GM12878 (cell line): ENCODE measurements at regions of chr17 and their contacts with region 1.

Region 1: DNA sequence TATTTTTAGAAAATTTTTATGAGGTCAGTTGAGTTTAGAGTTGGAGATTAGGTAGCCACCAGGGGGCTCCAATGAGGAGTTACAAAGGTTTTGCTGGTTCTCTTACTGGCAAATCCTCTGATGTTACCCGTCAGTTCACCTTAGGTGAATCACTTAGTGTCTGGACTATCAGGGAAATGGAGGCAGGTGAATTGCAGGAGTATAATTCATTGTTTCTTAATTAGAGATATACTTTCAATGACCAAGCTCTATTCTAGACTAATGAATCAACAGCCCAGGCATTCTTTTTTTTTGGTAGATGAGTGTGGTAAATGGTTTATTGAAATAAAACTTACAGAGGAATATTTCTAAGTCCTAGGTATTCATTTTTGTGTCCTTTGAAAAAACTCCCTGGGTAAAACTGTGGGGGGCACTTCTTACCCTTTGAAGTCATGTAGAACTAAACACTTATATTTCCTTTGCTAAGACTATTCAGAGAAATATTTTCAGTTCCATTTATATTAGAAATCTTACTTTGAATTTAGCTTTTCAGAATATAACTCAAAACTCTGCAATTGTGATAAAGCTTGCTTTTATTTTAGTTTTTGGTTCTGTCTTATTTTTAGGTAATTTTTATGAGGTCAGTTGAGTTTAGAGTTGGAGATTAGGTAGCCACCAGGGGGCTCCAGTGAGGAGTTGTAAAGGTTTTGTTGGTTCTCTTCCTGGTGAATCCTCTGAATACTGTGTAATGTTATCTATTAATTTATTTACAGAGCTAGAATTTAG is 17.7 kb downstream of the PSMD11 start:
- DNase-seq: no peak
- ATAC-seq: peak; percentile 93
- H3K4me3 ChIP-seq: no peak overlapping the region
- H3K27ac ChIP-seq: no peak overlapping the region
- H3K4me1 ChIP-seq: no peaks in the 10 kb centered on the region
- H3K27me3 ChIP-seq: no peaks in the 10 kb centered on the region
- CTCF ChIP-seq: peak; percentile 35 to 64 (median 59); a peak in 5 of 6 replicates
- EP300 ChIP-seq: no peak
- POLR2A ChIP-seq: no peak
- RAD21 ChIP-seq: peak; percentile 42

Region 2: GRCh38 chr17:32444308-32445073 is 17.5 kb before region 1 on chr17 and contains the start of gene PSMD11:
- CTCF ChIA-PET with region 1: interaction called, 102 read pairs
- POLR2A ChIA-PET with region 1: interaction called, 3 read pairs
- RAD21 ChIA-PET with region 1: interaction called, 9 read pairs
- SMC1A ChIA-PET with region 1: interaction called, 8 read pairs
- in situ Hi-C with region 1: no loop called
- intact Hi-C with region 1: no loop called
- DNase-seq: peak; percentile 78
- ATAC-seq: peak; percentile 97
- H3K4me3 ChIP-seq: peak within 1 kb of the TSS; percentile 97
- H3K27ac ChIP-seq: peak within 1 kb of the TSS; percentile 81
- H3K4me1 ChIP-seq: peaks cover 3% of the 10 kb centered on the region
- H3K27me3 ChIP-seq: no peaks in the 10 kb centered on the region
- CTCF ChIP-seq: peak; percentile 91 to 97 (median 92)
- EP300 ChIP-seq: no peak
- POLR2A ChIP-seq: peak; percentile 87
- RAD21 ChIP-seq: peak; percentile 49
- polyA plus RNA-seq, gene PSMD11: 283 to 291 TPM

Region 3: GRCh38 chr17:32519228-32520103 is 57.4 kb after region 1 on chr17:
- CTCF ChIA-PET with region 1: interaction called, 11 read pairs
- POLR2A ChIA-PET with region 1: interaction called, 5 read pairs
- RAD21 ChIA-PET with region 1: interaction called, 8 read pairs
- SMC1A ChIA-PET with region 1: interaction called, 5 read pairs
- in situ Hi-C with region 1: no loop called
- intact Hi-C with region 1: no loop called
- DNase-seq: no peak
- ATAC-seq: peak; percentile 38
- H3K4me3 ChIP-seq: peak overlapping the region; percentile 25; the same call in 1 of the 2 replicates
- H3K27ac ChIP-seq: peak overlapping the region; percentile 84
- H3K4me1 ChIP-seq: peaks cover 88% of the 10 kb centered on the region
- H3K27me3 ChIP-seq: no peaks in the 10 kb centered on the region
- CTCF ChIP-seq: no peak
- EP300 ChIP-seq: no peak
- POLR2A ChIP-seq: peak; percentile 61; the same call in 1 of the 2 replicates
- RAD21 ChIP-seq: no peak

Region 4: GRCh38 chr17:32602396-32602795 is 140.4 kb after region 1 on chr17:
- CTCF ChIA-PET with region 1: interaction called, 17 read pairs
- POLR2A ChIA-PET with region 1: no interaction called
- RAD21 ChIA-PET with region 1: interaction called, 8 read pairs
- SMC1A ChIA-PET with region 1: interaction called, 28 read pairs
- in situ Hi-C with region 1: no loop called
- intact Hi-C with region 1: loop called (anchors 5 kb)
- DNase-seq: no peak
- ATAC-seq: no peak
- H3K4me3 ChIP-seq: no peak overlapping the region
- H3K27ac ChIP-seq: no peak overlapping the region
- H3K4me1 ChIP-seq: no peaks in the 10 kb centered on the region
- H3K27me3 ChIP-seq: no peaks in the 10 kb centered on the region
- CTCF ChIP-seq: no peak
- EP300 ChIP-seq: no peak
- POLR2A ChIP-seq: no peak
- RAD21 ChIP-seq: no peak

Region 5: DNA sequence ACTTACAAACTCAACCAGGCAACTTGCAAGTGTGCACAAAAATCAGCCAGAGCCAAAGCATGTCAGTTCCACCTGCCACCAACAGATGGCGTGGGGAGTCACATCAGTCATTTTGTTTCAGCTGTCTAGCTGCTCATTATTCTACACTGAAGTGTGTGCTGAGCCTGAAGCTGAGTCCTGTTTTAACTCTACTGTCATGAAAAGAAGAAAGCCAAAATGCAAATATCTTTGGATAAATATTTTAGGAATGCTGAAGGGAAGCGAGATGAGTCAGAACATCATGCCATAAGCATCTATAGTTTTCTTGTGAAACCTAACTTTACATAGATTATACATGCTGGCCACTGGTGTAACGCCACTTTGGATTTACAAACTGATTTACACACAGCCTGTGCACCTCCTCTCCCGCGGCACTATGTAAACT is 197.4 kb after region 1 on chr17:
- CTCF ChIA-PET with region 1: interaction called, 32 read pairs
- POLR2A ChIA-PET with region 1: no interaction called
- RAD21 ChIA-PET with region 1: no interaction called
- SMC1A ChIA-PET with region 1: interaction called, 5 read pairs
- in situ Hi-C with region 1: no loop called
- intact Hi-C with region 1: no loop called
- DNase-seq: peak; percentile 40
- ATAC-seq: peak; percentile 87
- H3K4me3 ChIP-seq: no peak overlapping the region
- H3K27ac ChIP-seq: no peak overlapping the region
- H3K4me1 ChIP-seq: no peaks in the 10 kb centered on the region
- H3K27me3 ChIP-seq: no peaks in the 10 kb centered on the region
- CTCF ChIP-seq: peak; percentile 85 to 97 (median 94)
- EP300 ChIP-seq: no peak
- POLR2A ChIP-seq: no peak
- RAD21 ChIP-seq: peak; percentile 61

Region 6: GRCh38 chr17:32769839-32770238 is 307.8 kb after region 1 on chr17:
- CTCF ChIA-PET with region 1: interaction called, 15 read pairs
- POLR2A ChIA-PET with region 1: no interaction called
- RAD21 ChIA-PET with region 1: no interaction called
- SMC1A ChIA-PET with region 1: interaction called, 6 read pairs
- in situ Hi-C with region 1: no loop called
- intact Hi-C with region 1: no loop called
- DNase-seq: no peak
- ATAC-seq: no peak
- H3K4me3 ChIP-seq: no peak overlapping the region
- H3K27ac ChIP-seq: no peak overlapping the region
- H3K4me1 ChIP-seq: no peaks in the 10 kb centered on the region
- H3K27me3 ChIP-seq: no peaks in the 10 kb centered on the region
- CTCF ChIP-seq: 0 out of 6 replicates have a peak, but pooled peaks of 1 of the 3 experiments have one; percentile 12
- EP300 ChIP-seq: no peak
- POLR2A ChIP-seq: no peak
- RAD21 ChIP-seq: 0 out of 2 replicates have a peak, but pooled peaks have one; percentile 5

Region 7: GRCh38 chr17:32909787-32910369 is 447.8 kb after region 1 on chr17:
- CTCF ChIA-PET with region 1: interaction called, 4 read pairs
- POLR2A ChIA-PET with region 1: no interaction called
- RAD21 ChIA-PET with region 1: interaction called, 3 read pairs
- SMC1A ChIA-PET with region 1: interaction called, 6 read pairs
- in situ Hi-C with region 1: loop called (anchors 25 kb)
- intact Hi-C with region 1: no loop called
- DNase-seq: peak; percentile 46
- ATAC-seq: peak; percentile 97
- H3K4me3 ChIP-seq: no peak overlapping the region
- H3K27ac ChIP-seq: no peak overlapping the region
- H3K4me1 ChIP-seq: no peaks in the 10 kb centered on the region
- H3K27me3 ChIP-seq: no peaks in the 10 kb centered on the region
- CTCF ChIP-seq: peak; percentile 85 to 94 (median 91)
- EP300 ChIP-seq: no peak
- POLR2A ChIP-seq: no peak
- RAD21 ChIP-seq: peak; percentile 87